Endothelial cell of umbilical vein (primary cell): ENCODE measurements at regions of chr7 and their contacts with region 1.

Region 1: DNA sequence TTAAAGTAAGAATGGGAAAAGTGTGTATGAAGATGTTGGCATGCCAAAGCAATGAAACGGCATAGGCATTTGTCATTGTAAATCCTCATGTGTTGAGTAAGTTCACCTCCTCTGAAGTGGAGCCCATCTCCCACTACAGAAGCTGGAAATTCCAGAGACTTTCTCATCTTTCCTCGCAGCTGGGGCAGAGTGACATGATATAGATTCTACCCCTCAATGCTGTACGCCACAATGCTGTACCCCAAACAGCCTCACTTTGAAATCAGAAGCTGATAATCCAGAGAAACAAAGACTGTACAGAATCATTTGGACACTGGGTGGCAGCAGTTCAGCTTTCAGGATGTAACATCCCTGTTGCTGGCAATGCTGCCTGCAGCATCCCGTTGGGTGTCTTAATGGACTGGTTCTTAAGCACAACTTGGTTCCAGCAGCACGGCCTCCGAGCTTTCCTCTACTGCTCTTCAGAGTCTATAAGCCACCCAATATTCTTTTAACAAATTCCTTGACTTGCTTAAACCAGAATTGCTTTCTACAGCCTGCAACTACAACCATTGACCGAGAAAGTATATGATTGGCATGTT is 18.8 kb downstream of the ZC3HAV1L start:
- DNase-seq: peak; percentile 71
- H3K4me3 ChIP-seq: no peak overlapping the region
- H3K27ac ChIP-seq: no peak overlapping the region
- H3K4me1 ChIP-seq: no peaks in the 10 kb centered on the region
- H3K27me3 ChIP-seq: no peaks in the 10 kb centered on the region
- CTCF ChIP-seq: peak; percentile 64 to 65
- POLR2A ChIP-seq: no peak

Region 2: DNA sequence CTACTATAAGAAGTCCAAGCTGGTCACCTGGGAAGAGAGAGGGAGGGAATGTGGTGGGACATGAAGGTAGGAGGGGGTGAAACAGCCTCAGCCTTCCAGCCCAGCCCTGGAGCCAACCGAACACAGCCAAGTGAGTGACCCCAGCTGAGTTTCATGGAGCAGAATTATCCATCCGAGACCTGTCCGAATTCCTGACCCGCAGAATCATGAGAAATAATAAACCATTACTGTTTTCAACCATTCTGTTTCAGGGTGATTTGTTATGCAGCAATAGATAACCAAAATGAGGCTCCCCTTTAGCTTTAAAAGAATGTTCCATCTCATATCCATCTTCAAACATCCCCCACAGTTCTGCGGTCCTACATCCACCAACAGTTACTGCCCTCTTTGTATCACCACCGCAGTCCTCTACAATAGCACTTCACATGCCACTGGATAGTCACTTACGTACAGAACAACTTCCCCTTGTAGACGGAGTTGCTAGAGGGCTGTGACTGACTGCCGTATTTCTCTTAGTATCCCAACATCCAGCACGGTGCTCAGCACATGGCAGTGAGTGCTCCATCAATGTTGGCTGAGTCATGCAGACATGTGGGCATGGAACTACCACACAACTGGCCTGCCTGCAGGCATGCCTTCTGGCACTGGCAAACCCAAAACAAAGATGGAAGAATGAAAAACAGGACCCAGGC is 54.3 kb before region 1 on chr7:
- CTCF ChIA-PET with region 1: no interaction called
- POLR2A ChIA-PET with region 1: no interaction called
- dilution Hi-C with region 1: no loop called
- intact Hi-C with region 1: no loop called
- DNase-seq: no peak
- H3K4me3 ChIP-seq: no peak overlapping the region
- H3K27ac ChIP-seq: no peak overlapping the region
- H3K4me1 ChIP-seq: peaks cover 10% of the 10 kb centered on the region
- H3K27me3 ChIP-seq: no peaks in the 10 kb centered on the region
- CTCF ChIP-seq: no peak
- POLR2A ChIP-seq: no peak

Region 3: GRCh38 chr7:139035586-139036353 is 18.7 kb after region 1 on chr7 and contains the start of gene ZC3HAV1L:
- CTCF ChIA-PET with region 1: interaction called, 13 read pairs
- POLR2A ChIA-PET with region 1: no interaction called
- dilution Hi-C with region 1: no loop called
- intact Hi-C with region 1: no loop called
- DNase-seq: peak; percentile 84
- H3K4me3 ChIP-seq: peak within 1 kb of the TSS; percentile 35 to 85 (median 63)
- H3K27ac ChIP-seq: peak within 1 kb of the TSS; percentile 20
- H3K4me1 ChIP-seq: peaks cover 10% of the 10 kb centered on the region
- H3K27me3 ChIP-seq: no peaks in the 10 kb centered on the region
- CTCF ChIP-seq: no peak
- POLR2A ChIP-seq: peak; percentile 92
- total RNA-seq, gene ZC3HAV1L: 23.8 and 25.7 TPM in 2 replicates

Region 4: GRCh38 chr7:139058943-139059342 is 41.9 kb after region 1 on chr7:
- CTCF ChIA-PET with region 1: interaction called, 10 read pairs
- POLR2A ChIA-PET with region 1: no interaction called
- dilution Hi-C with region 1: no loop called
- intact Hi-C with region 1: no loop called
- DNase-seq: peak; percentile 81
- H3K4me3 ChIP-seq: no peak overlapping the region
- H3K27ac ChIP-seq: peak overlapping the region; percentile 67
- H3K4me1 ChIP-seq: peaks cover 23% of the 10 kb centered on the region
- H3K27me3 ChIP-seq: no peaks in the 10 kb centered on the region
- CTCF ChIP-seq: no peak
- POLR2A ChIP-seq: no peak

Region 5: DNA sequence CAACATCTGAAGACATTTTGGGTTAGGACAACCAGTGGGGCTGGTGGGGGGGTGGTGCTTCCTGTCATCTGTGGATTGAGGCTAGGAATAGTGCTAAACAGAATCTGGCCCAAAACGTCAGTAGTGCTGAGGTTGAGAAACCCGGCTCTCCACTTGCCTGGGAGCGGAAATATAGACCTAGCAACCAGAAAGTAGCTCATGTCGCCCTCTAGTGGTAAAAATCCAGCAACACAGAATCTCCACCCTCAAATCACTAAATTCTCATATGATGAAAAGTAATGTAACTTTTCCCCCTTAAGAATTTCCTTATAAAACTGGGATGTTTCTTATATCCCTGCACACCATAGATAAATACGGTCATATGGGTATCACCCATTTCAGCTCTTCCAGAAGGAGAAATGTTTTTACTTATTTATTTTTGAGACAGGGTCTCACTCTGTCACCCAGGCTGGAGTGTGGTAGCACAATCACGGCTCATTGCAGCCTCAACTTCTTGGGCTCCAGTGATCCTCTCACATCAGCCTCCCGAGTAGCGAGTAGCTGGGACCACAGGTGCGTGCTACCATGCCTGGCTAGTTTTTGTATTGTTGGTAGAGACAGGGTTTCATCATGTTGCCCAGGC is 58.1 kb after region 1 on chr7:
- CTCF ChIA-PET with region 1: interaction called, 111 read pairs
- POLR2A ChIA-PET with region 1: no interaction called
- dilution Hi-C with region 1: no loop called
- intact Hi-C with region 1: loop called (anchors 1 kb)
- DNase-seq: peak; percentile 81
- H3K4me3 ChIP-seq: no peak overlapping the region
- H3K27ac ChIP-seq: peak overlapping the region; percentile 61
- H3K4me1 ChIP-seq: peaks cover 7% of the 10 kb centered on the region
- H3K27me3 ChIP-seq: no peaks in the 10 kb centered on the region
- CTCF ChIP-seq: peak; percentile 65 to 74
- POLR2A ChIP-seq: no peak

Region 6: GRCh38 chr7:139127648-139128047 is 110.6 kb after region 1 on chr7:
- CTCF ChIA-PET with region 1: interaction called, 32 read pairs
- POLR2A ChIA-PET with region 1: no interaction called
- dilution Hi-C with region 1: no loop called
- intact Hi-C with region 1: loop called (anchors 1 kb)
- DNase-seq: peak; percentile 23
- H3K4me3 ChIP-seq: no peak overlapping the region
- H3K27ac ChIP-seq: no peak overlapping the region
- H3K4me1 ChIP-seq: no peaks in the 10 kb centered on the region
- H3K27me3 ChIP-seq: peaks cover 15 to 18% of the 10 kb centered on the region in 2 experiments
- CTCF ChIP-seq: no peak
- POLR2A ChIP-seq: no peak

Region 7: GRCh38 chr7:139321071-139321745 is 304.2 kb after region 1 on chr7:
- CTCF ChIA-PET with region 1: no interaction called
- POLR2A ChIA-PET with region 1: no interaction called
- dilution Hi-C with region 1: no loop called
- intact Hi-C with region 1: loop called (anchors 5 kb)
- DNase-seq: peak; percentile 17
- H3K4me3 ChIP-seq: no peak overlapping the region
- H3K27ac ChIP-seq: no peak overlapping the region
- H3K4me1 ChIP-seq: no peaks in the 10 kb centered on the region
- H3K27me3 ChIP-seq: no peaks in the 10 kb centered on the region
- CTCF ChIP-seq: peak; percentile 9 to 30
- POLR2A ChIP-seq: no peak